IMR-90 (cell line): ENCODE measurements at regions of chr7 and their contacts with region 1.

Region 1: GRCh38 chr7:24401628-24402593 is 117.9 kb downstream of the NPY start:
- DNase-seq: peak; percentile 40
- ATAC-seq: peak; percentile 63; the same call in 1 of the 2 replicates
- H3K4me3 ChIP-seq: peak overlapping the region; percentile 45
- H3K27ac ChIP-seq: no peak overlapping the region
- H3K4me1 ChIP-seq: no peaks in the 10 kb centered on the region
- H3K27me3 ChIP-seq: peaks cover 3% of the 10 kb centered on the region
- CTCF ChIP-seq: peak; percentile 53
- POLR2A ChIP-seq: no peak
- RAD21 ChIP-seq: peak; percentile 56

Region 2: DNA sequence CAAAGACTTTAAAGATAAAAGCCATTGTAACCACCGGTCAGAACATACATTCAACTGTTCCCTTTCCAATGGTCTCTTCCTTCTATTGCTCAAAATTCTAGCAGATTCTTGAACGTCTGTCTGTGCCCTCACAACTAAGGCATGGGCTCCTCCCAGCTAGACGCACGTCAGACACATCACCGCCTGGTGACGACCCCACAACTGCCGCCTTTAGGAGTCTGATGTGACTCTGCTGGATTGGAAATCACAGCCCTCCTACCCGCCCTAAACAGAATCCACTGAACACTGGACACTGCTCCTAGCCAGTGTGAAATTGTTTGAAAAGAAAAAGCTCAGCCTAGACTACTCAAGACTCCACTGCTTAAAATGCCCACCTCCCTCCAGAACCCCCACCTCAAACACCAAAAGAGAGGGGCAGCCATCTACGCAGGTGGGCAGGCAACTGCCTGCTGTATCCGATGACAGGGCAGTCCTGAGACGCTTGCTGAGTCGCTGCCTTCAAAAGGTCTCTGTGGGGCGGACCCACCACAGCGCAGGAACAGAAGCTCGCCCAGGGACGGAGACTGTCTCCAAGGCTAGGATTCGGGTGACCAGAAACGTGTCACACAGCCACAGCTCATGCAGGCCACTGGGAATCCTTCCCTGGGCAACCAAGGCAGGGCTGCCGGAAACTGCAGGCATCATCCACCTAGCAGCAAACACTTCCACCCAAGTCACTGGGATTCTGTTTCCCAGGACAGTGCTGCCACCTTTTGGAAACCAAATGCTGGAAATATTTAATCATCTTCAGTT is 320.7 kb after region 1 on chr7:
- CTCF ChIA-PET with region 1: no interaction called
- POLR2A ChIA-PET with region 1: no interaction called
- dilution Hi-C with region 1: no loop called
- in situ Hi-C with region 1: no loop called
- intact Hi-C with region 1: no loop called
- DNase-seq: no peak
- ATAC-seq: no peak
- H3K4me3 ChIP-seq: no peak overlapping the region
- H3K27ac ChIP-seq: no peak overlapping the region
- H3K4me1 ChIP-seq: peaks cover 4% of the 10 kb centered on the region; the same call in 1 of the 2 replicates
- H3K27me3 ChIP-seq: no peaks in the 10 kb centered on the region
- CTCF ChIP-seq: no peak
- POLR2A ChIP-seq: no peak
- RAD21 ChIP-seq: no peak

Region 3: GRCh38 chr7:25098096-25099046 is 696.5 kb after region 1 on chr7:
- CTCF ChIA-PET with region 1: no interaction called
- POLR2A ChIA-PET with region 1: no interaction called
- dilution Hi-C with region 1: no loop called
- in situ Hi-C with region 1: no loop called
- intact Hi-C with region 1: loop called (anchors 2 kb)
- DNase-seq: peak; percentile 75
- ATAC-seq: peak; percentile 82
- H3K4me3 ChIP-seq: no peak overlapping the region
- H3K27ac ChIP-seq: no peak overlapping the region
- H3K4me1 ChIP-seq: no peaks in the 10 kb centered on the region
- H3K27me3 ChIP-seq: no peaks in the 10 kb centered on the region
- CTCF ChIP-seq: peak; percentile 96
- POLR2A ChIP-seq: no peak
- RAD21 ChIP-seq: peak; percentile 85

Region 4: DNA sequence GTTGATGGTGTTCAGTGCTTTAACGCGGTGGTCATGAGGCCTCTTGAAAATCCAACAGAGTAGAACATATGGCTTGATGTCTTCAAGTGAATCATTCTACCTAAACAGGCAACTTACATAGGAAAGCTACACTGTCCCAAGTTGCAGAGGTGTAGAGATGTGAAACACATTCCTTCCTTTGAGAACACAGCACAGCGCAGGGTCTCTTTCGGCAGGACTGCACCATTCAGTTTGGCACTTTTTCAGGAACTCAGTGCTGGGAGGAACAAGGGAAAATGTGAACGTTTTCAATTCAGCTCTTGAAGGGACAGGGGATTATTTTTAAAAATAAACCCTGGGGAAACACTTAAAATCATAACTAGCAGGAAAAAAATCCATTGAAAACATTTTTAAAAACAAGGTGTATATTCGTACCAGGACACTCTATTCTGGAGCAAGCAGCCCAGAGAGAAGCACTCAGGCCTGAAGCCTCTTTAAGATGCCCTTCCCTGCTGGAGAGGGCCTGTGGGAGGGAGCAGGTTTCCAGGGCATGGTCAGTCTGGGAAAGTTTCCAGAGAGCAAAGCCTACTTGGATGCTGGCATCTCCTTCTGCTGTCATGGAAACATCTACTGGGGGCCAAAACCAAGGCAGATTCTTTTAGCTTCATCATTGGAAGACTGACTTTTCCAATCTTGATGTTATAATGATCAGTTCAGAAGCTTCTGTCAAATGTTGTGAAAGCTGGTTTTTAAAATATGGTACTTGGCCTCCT is 886.8 kb after region 1 on chr7:
- CTCF ChIA-PET with region 1: no interaction called
- POLR2A ChIA-PET with region 1: no interaction called
- dilution Hi-C with region 1: no loop called
- in situ Hi-C with region 1: no loop called
- intact Hi-C with region 1: no loop called
- DNase-seq: no peak
- ATAC-seq: no peak
- H3K4me3 ChIP-seq: no peak overlapping the region
- H3K27ac ChIP-seq: no peak overlapping the region
- H3K4me1 ChIP-seq: no peaks in the 10 kb centered on the region
- H3K27me3 ChIP-seq: no peaks in the 10 kb centered on the region
- CTCF ChIP-seq: no peak
- POLR2A ChIP-seq: no peak
- RAD21 ChIP-seq: no peak